ENCODE measurements at regions of chr12 and their contacts with region 1.

Region 1: DNA sequence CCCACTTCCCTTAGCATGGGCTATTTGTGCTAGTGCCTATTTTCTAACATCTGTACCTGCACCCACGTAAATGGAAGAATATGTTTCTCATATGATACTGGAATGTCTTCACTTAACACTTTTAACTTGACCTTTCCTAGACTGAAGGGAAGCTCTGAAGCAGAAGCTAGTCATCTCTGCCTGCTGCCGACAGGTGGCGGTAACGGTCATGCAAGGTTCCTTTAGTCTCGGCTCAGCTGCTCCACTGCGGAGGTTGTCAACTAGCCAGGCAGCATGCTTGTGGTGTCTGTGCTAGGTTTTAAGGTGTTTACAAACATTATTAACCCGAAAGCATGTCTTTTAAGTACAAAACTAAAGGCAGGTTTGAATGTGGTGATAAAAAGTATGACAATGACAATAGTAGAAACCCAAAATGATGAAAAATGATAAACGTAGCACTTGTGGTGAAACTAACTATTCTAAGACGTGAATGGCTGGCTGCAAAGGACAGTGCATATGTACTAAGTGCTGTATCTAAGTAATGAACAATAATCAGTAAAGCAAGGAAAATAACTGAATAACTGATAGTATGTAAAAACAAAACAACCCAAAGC is 117.2 kb downstream of the GRIN2B start:
- DNase-seq: peak; percentile 66 to 73
- ATAC-seq: peak in 5 of 8 donors; percentile 49 to 75 (median 57)
- H3K4me3 ChIP-seq: no peak overlapping the region
- H3K27ac ChIP-seq: no peak overlapping the region
- H3K4me1 ChIP-seq: no peaks in the 10 kb centered on the region
- H3K27me3 ChIP-seq: peaks cover 0 to 62% (median 25%) of the 10 kb centered on the region in 7 donors
- CTCF ChIP-seq: peak; percentile 53 to 93 (median 90)

Region 2: GRCh38 chr12:14153803-14154202 is 289.6 kb after region 1 on chr12:
- intact Hi-C with region 1: loop called in 1 of 10 experiments (anchors 5 kb)
- DNase-seq: no peak
- ATAC-seq: no peak
- H3K4me3 ChIP-seq: no peak overlapping the region
- H3K27ac ChIP-seq: no peak overlapping the region
- H3K4me1 ChIP-seq: no peaks in the 10 kb centered on the region
- H3K27me3 ChIP-seq: peaks cover 0 to 5% (median 0%) of the 10 kb centered on the region in 7 donors
- CTCF ChIP-seq: no peak

Measured in heart right ventricle (tissue), 16 donors.